ENCODE measurements at regions of chr10 and their contacts with region 1.

Region 1: DNA sequence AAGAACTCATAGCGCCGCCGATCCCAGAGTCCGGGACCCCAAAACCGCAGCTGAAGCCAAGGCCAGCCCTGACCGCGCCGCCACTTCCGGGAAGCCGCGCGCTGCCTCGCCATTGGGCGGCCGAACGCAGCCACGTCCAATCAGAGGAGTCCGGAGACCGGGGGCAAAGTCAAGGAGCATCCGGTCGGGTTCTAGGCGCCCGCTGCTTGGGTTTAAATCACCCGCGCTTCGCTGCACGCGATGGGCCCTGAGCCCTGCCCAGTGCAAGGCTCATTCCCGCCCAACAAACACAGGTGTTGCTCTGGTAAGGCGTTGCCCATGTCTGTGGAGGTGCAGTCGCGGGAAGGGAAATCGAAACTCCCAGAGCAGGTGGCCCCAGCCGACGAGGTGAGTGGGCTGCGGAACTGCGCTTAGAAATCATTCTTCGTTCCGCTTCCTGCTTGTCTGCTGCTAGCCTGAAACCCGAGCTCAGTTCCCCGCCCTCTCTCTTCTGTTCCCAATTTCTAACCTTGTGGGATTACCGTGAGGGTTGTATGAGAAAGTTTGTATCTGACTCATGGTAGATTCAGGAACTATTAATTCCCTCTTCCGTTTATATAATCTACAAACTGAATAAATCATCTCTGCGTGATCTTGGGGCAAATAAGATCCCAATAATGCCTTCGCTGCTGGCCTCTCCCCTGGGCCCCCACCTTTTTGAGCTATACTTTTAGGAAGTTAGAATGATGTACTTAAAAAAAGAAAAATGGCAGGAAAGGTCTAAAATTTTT is at the start of gene DCLRE1C:
- DNase-seq: peak; percentile 82
- ATAC-seq: peak; percentile 86
- H3K4me3 ChIP-seq: peak within 1 kb of the TSS; percentile 91
- H3K27ac ChIP-seq: peak within 1 kb of the TSS; percentile 98
- H3K4me1 ChIP-seq: peaks cover 21% of the 10 kb centered on the region
- H3K27me3 ChIP-seq: no peaks in the 10 kb centered on the region
- CTCF ChIP-seq: no peak
- EP300 ChIP-seq: peak in 1 of 2 experiments; percentile 56; a peak in 2 of 4 replicates
- POLR2A ChIP-seq: peak; percentile 80
- RAD21 ChIP-seq: no peak
- polyA plus RNA-seq, gene DCLRE1C: 15.7 to 26.2 TPM

Region 2: DNA sequence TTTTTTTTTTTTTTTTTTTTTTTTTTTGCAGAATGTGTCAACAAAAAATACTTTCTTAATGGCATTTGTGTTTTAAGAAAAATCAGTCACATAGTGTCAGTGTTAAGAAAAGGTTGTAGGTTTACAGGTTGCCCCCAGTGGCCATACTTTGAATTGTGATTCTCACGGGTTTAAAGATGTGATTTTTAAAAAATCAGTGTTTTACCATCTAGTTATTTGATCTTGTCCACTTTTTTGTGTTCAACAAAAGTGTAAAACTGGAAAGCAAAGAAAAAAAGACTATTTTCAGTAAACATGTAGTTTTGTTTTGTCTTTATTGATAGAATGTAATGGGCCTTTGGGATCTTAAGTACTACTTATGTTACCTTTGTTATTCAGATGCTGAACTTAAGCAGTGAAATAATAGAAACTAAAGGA is 49.9 kb before region 1 on chr10:
- CTCF ChIA-PET with region 1: interaction called, 22 read pairs
- POLR2A ChIA-PET with region 1: no interaction called
- RAD21 ChIA-PET with region 1: no interaction called
- SMC1A ChIA-PET with region 1: interaction called, 6 read pairs
- in situ Hi-C with region 1: no loop called
- intact Hi-C with region 1: no loop called
- DNase-seq: no peak
- ATAC-seq: peak; percentile 88
- H3K4me3 ChIP-seq: no peak overlapping the region
- H3K27ac ChIP-seq: no peak overlapping the region
- H3K4me1 ChIP-seq: no peaks in the 10 kb centered on the region
- H3K27me3 ChIP-seq: no peaks in the 10 kb centered on the region
- CTCF ChIP-seq: peak; percentile 41 to 57 (median 51)
- EP300 ChIP-seq: no peak
- POLR2A ChIP-seq: no peak
- RAD21 ChIP-seq: peak; percentile 31; the same call in 1 of the 2 replicates

Region 3: DNA sequence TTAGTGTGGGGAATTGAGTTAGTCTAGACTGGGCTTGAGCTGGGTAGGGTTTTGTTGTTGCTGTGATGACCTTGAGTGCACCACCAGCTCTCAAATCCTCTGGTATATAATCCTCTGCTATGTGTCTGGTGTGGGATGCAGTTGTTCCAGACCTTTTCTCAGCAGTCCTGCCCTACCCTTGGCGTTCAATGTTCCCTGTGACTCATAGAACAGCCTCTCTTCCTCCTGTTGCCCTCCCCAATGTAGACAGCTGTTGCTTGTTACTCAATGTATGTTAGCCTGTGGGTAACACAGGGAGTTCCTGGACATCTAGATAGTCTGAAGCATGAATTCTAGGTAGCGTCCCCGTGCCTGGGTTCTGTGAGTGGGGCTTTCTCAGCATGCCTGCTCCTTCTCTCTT is 114.6 kb after region 1 on chr10:
- CTCF ChIA-PET with region 1: no interaction called
- POLR2A ChIA-PET with region 1: no interaction called
- RAD21 ChIA-PET with region 1: no interaction called
- SMC1A ChIA-PET with region 1: no interaction called
- in situ Hi-C with region 1: no loop called
- intact Hi-C with region 1: no loop called
- DNase-seq: no peak
- ATAC-seq: no peak; the same call in 2 of the 3 replicates
- H3K4me3 ChIP-seq: no peak overlapping the region
- H3K27ac ChIP-seq: no peak overlapping the region
- H3K4me1 ChIP-seq: no peaks in the 10 kb centered on the region
- H3K27me3 ChIP-seq: no peaks in the 10 kb centered on the region; a peak in 1 of 4 replicates
- CTCF ChIP-seq: no peak
- EP300 ChIP-seq: no peak
- POLR2A ChIP-seq: no peak
- RAD21 ChIP-seq: no peak

Region 4: DNA sequence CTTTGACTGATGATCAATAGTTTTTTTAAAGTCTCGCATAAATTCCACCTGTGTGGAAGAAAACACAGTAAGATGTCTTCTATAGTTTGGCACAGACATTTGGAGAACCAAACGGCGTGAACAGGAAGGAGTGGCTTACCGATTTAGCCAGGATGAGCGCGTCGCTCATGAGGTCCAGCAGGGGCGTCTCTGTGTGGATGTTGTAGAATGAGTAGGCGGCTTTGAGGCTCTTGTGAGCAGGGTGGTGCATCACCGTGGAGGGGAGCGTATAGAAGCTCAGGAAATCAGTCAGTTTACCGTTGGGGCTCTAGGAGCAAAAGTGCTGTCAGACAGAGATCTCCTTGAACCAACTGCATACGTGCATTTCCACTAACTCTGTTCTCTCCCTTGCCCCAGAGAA is 158.5 kb after region 1 on chr10:
- CTCF ChIA-PET with region 1: no interaction called
- POLR2A ChIA-PET with region 1: no interaction called
- RAD21 ChIA-PET with region 1: no interaction called
- SMC1A ChIA-PET with region 1: no interaction called
- in situ Hi-C with region 1: no loop called
- intact Hi-C with region 1: no loop called
- DNase-seq: no peak
- ATAC-seq: no peak
- H3K4me3 ChIP-seq: no peak overlapping the region
- H3K27ac ChIP-seq: no peak overlapping the region
- H3K4me1 ChIP-seq: no peaks in the 10 kb centered on the region
- H3K27me3 ChIP-seq: no peaks in the 10 kb centered on the region
- CTCF ChIP-seq: no peak
- EP300 ChIP-seq: no peak
- POLR2A ChIP-seq: no peak
- RAD21 ChIP-seq: no peak

Measured in GM12878 (cell line).